Psoas muscle (tissue), 8 donors: ENCODE measurements at regions of chr15 and their contacts with region 1.

Region 1: GRCh38 chr15:47756872-47757271 is 39.6 kb downstream of the SEMA6D start:
- DNase-seq: peak; percentile 42 to 79
- ATAC-seq: peak; percentile 98 to 100 (median 100)
- H3K4me3 ChIP-seq: no peak overlapping the region
- H3K27ac ChIP-seq: peak overlapping the region; percentile 75
- H3K4me1 ChIP-seq: peaks cover 27% of the 10 kb centered on the region
- H3K27me3 ChIP-seq: no peaks in the 10 kb centered on the region
- CTCF ChIP-seq: no peak

Region 2: GRCh38 chr15:47725906-47726305 is 31.0 kb before region 1 on chr15:
- intact Hi-C with region 1: loop called in 1 of 2 experiments (anchors 2 kb)
- DNase-seq: peak in 1 of 2 donors; percentile 69
- ATAC-seq: peak; percentile 81 to 91 (median 88)
- H3K4me3 ChIP-seq: peak overlapping the region; percentile 34
- H3K27ac ChIP-seq: peak overlapping the region; percentile 91
- H3K4me1 ChIP-seq: peaks cover 86% of the 10 kb centered on the region
- H3K27me3 ChIP-seq: no peaks in the 10 kb centered on the region
- CTCF ChIP-seq: no peak